ENCODE measurements at regions of chr1 and their contacts with region 1.

Region 1: GRCh38 chr1:160675641-160676410 is 29.0 kb upstream of the SLAMF1 start:
- DNase-seq: peak; percentile 68
- H3K4me3 Mint-ChIP-seq: peak overlapping the region; percentile 19
- H3K27ac Mint-ChIP-seq: peak overlapping the region; percentile 42
- H3K4me1 Mint-ChIP-seq: peaks cover 47% of the 10 kb centered on the region
- H3K27me3 Mint-ChIP-seq: no peaks in the 10 kb centered on the region

Region 2: GRCh38 chr1:160618763-160619274 is 57.0 kb before region 1 on chr1:
- intact Hi-C with region 1: loop called (anchors 1 kb)
- DNase-seq: no peak
- H3K4me3 Mint-ChIP-seq: peak overlapping the region; percentile 24
- H3K27ac Mint-ChIP-seq: peak overlapping the region; percentile 51
- H3K4me1 Mint-ChIP-seq: peaks cover 76% of the 10 kb centered on the region
- H3K27me3 Mint-ChIP-seq: no peaks in the 10 kb centered on the region

Region 3: DNA sequence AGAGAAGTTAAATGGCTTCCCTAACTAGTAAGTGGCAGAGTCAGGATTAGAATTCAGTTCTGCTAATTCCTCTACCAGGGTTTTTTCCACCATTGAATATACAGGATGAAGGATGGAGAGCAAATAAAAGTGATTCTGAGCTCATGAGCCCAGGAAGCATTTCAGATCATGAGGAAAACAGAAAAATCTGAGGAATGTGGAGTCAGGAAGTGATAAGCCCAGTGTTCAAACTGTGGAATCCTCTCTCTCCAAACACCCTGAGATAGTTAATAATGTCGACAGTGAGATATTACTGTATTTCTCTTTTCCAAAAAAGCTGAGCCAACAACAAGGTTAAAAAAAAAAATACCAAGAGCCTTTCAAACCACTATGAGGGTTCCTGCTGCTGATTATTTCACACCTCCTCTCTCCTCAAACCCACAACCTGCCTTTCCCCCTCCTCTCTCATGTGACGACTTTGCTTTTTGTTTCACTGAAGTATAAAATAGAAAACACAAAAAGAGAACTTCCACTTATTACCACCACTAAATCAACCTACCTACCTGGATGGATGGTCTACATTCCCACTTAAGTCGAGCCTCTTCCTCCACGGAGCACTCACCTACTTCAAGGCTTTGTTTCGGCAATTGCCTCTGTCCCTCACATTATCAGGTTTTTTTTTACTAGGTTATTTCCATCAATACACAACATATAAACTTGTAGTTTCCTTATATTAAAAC is 37.8 kb before region 1 on chr1:
- intact Hi-C with region 1: loop called (anchors 1 kb)
- DNase-seq: peak; percentile 64
- H3K4me3 Mint-ChIP-seq: peak overlapping the region; percentile 66
- H3K27ac Mint-ChIP-seq: peak overlapping the region; percentile 97
- H3K4me1 Mint-ChIP-seq: peaks cover 93% of the 10 kb centered on the region
- H3K27me3 Mint-ChIP-seq: no peaks in the 10 kb centered on the region

Region 4: DNA sequence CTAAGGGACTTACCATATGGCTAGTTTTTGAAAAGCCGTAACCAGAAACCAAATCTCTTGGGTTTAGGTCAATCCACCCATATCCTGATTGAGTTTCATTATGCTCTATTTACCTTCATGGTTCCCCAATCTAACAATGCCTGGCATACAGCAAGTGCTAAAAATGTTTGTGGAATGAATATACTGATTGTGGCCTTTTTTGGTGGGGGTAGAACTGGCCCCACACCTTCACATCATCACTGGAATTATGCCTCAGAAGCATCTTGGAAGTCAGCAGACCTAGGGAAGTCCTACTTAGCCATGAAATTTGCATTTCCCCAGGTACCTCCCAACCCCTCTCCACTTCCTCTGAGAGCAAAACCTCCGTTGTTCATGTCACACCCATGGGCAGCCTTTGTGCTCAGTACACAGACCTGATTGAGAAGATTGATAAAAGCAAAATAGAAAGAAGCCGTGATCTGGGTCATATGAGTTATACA is 11.2 kb before region 1 on chr1:
- intact Hi-C with region 1: loop called (anchors 1 kb)
- DNase-seq: no peak
- H3K4me3 Mint-ChIP-seq: peak overlapping the region; percentile 81
- H3K27ac Mint-ChIP-seq: peak overlapping the region; percentile 96
- H3K4me1 Mint-ChIP-seq: peaks cover 84% of the 10 kb centered on the region
- H3K27me3 Mint-ChIP-seq: no peaks in the 10 kb centered on the region

Region 5: GRCh38 chr1:160951443-160952128 is 275.8 kb after region 1 on chr1:
- intact Hi-C with region 1: loop called (anchors 1 kb)
- DNase-seq: peak; percentile 52
- H3K4me3 Mint-ChIP-seq: no peak overlapping the region
- H3K27ac Mint-ChIP-seq: no peak overlapping the region
- H3K4me1 Mint-ChIP-seq: peaks cover 11% of the 10 kb centered on the region
- H3K27me3 Mint-ChIP-seq: peaks cover 6% of the 10 kb centered on the region

Measured in activated T-helper 1 cell treated with anti-CD3 and anti-CD28 coated beads, Interleukin-12 subunit alpha, Interleukin-12 subunit beta, Interleukin-2, Interleukin-4 antibody, amounts not matched to agents 30 ng/mL and 10 ng/mL and 1 ng/mL, durations not matched to agents 14 hours and 24 hours and 36 hours (primary cell).